ENCODE measurements at regions of chr2 and their contacts with region 1.

Region 1: DNA sequence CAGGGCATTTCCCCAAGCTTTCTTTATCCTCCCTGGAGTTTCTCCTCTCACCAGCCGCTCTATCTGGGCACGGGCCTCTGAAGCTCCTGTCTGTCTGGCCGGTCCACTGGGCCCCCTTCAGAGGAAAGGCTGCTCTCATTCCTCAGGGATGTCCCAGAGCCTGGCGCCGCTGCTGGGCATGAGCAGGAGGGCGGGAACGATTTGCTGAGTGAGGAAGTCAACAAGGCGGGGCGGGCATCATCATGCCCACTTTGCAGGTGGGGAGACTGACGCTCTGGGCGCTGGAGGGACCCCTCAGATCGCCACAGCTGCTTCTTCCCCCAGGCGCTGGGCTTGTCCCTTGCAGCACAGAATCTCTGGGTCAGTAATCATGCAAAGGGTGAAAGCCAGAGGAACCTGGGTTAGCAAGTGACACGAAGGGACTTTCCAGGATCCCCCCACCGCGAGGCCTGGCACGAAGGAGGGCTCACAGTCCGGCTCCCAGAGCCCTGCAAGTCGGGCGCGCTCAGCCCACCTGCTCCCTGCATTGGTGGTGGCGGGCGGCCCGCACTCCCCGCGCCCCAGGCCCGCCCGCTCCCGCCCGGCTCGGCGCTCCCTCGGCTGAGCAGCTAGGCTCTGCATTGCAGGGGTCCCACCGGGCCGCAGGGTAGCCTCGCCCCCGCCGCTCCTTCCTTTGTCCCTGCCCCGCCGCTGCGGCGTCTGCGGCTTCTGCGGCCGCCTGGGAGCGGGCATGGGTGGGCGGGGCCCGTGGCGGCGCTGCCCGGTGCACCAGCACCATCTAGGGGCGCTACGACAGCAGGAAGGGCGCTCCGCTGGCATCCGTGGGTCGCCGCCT is 157.8 kb downstream of the CYRIA start:
- DNase-seq: no peak
- H3K4me3 Mint-ChIP-seq: no peak overlapping the region
- H3K27ac Mint-ChIP-seq: no peak overlapping the region
- H3K4me1 Mint-ChIP-seq: no peaks in the 10 kb centered on the region
- H3K27me3 Mint-ChIP-seq: peaks cover 28% of the 10 kb centered on the region

Region 2: GRCh38 chr2:15939854-15940660 is 567.8 kb before region 1 on chr2 and contains the start of gene MYCN:
- intact Hi-C with region 1: loop called (anchors 5 kb)
- DNase-seq: peak; percentile 10
- H3K4me3 Mint-ChIP-seq: no peak within 1 kb of the TSS
- H3K27ac Mint-ChIP-seq: no peak within 1 kb of the TSS
- H3K4me1 Mint-ChIP-seq: peaks cover 5% of the 10 kb centered on the region
- H3K27me3 Mint-ChIP-seq: peaks cover 59% of the 10 kb centered on the region
- total RNA-seq, gene MYCN: not detected in 2 replicates

Region 3: DNA sequence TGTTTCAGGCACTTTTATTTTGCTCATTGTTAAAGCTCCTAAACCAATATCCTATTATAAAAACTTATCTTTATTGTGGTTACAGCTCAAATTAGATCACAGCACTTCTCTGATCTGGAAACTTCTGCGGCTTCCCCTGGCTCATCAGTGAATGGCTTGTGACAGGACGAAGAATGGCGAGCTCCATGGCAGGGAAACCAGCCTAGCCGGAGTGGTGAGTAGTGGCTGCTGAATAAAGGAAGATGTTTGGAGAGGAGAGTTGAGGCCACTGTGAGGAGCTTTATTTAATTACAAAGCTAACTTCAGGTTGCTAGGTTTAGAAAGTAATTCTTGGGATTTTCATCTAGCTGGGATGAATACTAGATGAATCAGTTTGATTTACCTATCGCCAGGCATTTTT is 55.8 kb before region 1 on chr2:
- intact Hi-C with region 1: no loop called
- DNase-seq: no peak
- H3K4me3 Mint-ChIP-seq: no peak overlapping the region
- H3K27ac Mint-ChIP-seq: no peak overlapping the region
- H3K4me1 Mint-ChIP-seq: no peaks in the 10 kb centered on the region
- H3K27me3 Mint-ChIP-seq: no peaks in the 10 kb centered on the region

Measured in activated T-helper 1 cell treated with anti-CD3 and anti-CD28 coated beads, Interleukin-12 subunit alpha, Interleukin-12 subunit beta, Interleukin-2, Interleukin-4 antibody, amounts not matched to agents 30 ng/mL and 10 ng/mL and 1 ng/mL, durations not matched to agents 14 hours and 24 hours and 36 hours (primary cell).